ENCODE measurements at regions of chrX and their contacts with region 1.

Region 1: GRCh38 chrX:49269010-49269767 is 404 bp upstream of the PPP1R3F start:
- DNase-seq: peak; percentile 97
- H3K4me3 Mint-ChIP-seq: peak overlapping the region; percentile 85
- H3K27ac Mint-ChIP-seq: peak overlapping the region; percentile 98
- H3K4me1 Mint-ChIP-seq: peaks cover 48% of the 10 kb centered on the region
- H3K27me3 Mint-ChIP-seq: no peaks in the 10 kb centered on the region

Region 2: DNA sequence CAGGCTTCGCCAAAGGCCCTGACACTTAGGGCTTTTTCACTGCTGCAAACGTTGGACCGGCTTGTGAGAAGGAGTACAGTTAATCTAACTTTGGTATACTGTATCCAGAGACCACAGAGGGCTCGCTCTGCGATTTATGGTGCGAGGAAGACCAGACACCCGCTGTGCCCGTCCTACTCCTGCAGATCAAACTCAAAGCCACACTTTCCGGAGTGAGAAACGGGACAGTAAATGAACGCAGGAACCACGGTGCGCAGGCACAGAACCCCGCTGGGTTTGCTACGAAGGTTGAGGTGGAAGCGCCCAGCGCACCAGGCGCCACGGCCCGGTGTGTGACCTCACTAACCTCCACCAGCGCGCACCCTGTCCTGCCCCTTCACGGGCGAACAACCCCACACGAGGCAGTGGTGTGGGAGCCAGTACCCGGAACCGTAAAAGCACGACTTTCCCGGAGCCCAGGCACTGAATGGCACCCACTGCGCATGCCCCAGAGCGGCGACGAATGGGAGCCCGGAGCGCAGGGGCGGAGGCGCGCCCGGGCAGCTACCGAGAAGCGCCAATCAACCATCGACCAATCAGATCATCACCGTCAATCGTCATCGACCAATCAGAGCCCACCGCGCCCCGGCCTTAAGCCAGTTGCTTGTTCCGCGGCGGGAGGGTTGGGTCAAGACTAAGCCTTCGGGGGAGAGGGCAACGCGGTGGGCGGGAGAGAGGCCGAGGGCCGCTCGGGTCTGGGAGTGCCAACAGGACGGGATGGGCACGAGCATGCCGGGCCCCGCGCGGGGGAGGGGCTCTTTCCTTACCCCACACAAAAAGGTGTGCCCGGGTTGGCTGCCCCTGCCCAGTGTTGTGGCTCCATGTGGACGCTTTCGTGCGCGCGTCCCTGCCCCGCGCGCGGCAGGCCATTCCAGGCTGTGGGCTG is 168.2 kb before region 1 on chrX:
- CTCF ChIA-PET with region 1: no interaction called
- intact Hi-C with region 1: loop called (anchors 2 kb)
- DNase-seq: peak; percentile 90
- H3K4me3 Mint-ChIP-seq: peak overlapping the region; percentile 90
- H3K27ac Mint-ChIP-seq: peak overlapping the region; percentile 89
- H3K4me1 Mint-ChIP-seq: peaks cover 8% of the 10 kb centered on the region
- H3K27me3 Mint-ChIP-seq: no peaks in the 10 kb centered on the region

Region 3: DNA sequence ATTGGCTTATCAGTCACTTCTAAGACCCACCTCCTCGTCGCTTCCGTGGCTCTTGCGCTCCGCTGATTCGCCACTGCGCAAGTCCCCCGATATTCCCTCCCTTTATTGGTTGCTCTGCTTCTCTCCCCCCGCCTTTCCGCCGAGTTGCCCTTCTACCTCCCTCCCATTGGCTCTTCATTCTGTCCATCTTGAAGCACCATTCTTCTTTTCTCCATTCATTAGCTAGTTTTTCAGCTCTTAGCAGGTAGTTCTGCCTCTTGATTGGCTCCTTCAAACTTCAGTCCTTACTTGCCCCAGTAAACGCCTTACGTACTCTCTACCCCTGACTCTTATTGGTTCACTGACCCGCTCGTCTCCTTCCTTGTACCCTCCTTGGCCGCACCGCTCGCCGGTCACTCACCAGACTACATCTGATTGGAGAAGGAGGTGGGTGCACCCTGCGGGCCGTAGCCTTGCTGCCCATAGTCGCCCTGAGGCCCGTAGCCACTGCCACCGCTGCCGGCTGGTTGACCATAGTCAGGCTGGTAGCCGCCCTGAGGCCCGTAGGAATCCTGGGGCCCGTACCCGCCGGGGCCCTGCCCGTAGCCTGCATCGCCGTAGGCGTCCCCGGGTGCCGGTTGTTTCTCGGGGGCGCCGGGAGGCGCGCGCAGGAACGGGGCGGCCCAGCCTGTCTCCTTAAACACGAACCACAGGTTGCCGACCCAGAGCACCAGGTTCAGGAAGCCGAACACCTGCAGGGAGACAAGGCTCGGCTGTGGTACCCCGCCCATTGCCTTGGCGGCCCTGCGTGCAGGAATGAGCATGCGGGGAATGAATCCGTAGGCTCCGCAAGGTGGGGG is 77.9 kb before region 1 on chrX:
- CTCF ChIA-PET with region 1: interaction called, 5 read pairs
- intact Hi-C with region 1: loop called (anchors 1 kb)
- DNase-seq: peak; percentile 89
- H3K4me3 Mint-ChIP-seq: peak overlapping the region; percentile 97
- H3K27ac Mint-ChIP-seq: peak overlapping the region; percentile 94
- H3K4me1 Mint-ChIP-seq: peaks cover 25% of the 10 kb centered on the region
- H3K27me3 Mint-ChIP-seq: no peaks in the 10 kb centered on the region

Region 4: DNA sequence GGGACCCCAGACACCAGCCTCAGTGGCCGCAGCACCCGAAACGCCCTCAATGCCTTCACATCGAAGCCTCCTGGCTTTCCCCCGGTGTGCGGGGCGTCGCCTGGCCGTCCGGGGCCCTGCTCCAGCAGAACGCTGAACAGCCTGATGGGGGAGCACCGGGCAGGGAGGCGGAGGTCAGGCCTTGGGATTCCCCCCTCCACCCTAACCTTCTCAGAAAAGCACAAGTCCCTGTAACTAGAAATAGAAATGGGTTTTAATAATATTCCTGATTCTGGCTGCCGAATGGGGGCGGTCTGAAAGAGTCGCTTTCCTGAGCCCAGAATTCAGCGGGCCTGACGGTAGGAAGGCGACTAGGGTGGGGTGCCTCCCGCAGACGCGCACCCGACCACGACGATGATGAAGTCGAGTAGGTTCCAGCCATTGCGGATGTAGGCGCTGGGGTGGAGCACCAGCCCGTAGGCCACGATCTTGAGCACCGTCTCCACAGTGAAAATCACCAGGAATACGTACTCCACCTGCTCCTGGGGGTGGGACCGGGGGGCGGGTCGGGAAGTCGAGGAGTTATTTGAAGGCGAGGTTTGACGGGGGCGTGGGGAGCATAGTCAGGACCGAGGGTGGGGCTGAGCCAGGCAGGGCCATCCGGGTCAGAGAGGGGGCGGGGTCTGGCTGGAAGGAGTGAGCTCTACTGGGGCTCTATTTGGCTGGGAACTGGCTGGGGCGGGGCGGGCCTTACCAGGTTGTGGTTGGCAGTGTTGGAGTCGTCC is 38.5 kb before region 1 on chrX:
- CTCF ChIA-PET with region 1: no interaction called
- intact Hi-C with region 1: loop called (anchors 1 kb)
- DNase-seq: peak; percentile 77
- H3K4me3 Mint-ChIP-seq: peak overlapping the region; percentile 67
- H3K27ac Mint-ChIP-seq: peak overlapping the region; percentile 74
- H3K4me1 Mint-ChIP-seq: peaks cover 10% of the 10 kb centered on the region
- H3K27me3 Mint-ChIP-seq: no peaks in the 10 kb centered on the region

Measured in activated naive CD4-positive, alpha-beta T cell treated with anti-CD3 and anti-CD28 coated beads for 36 hours (primary cell).